ENCODE measurements at regions of chr9 and their contacts with region 1.

Region 1: GRCh38 chr9:112074250-112075008 is 100.7 kb downstream of the SUSD1 start:
- DNase-seq: peak; percentile 40
- ATAC-seq: peak; percentile 70
- H3K4me3 ChIP-seq: no peak overlapping the region
- H3K27ac ChIP-seq: no peak overlapping the region
- H3K4me1 ChIP-seq: peaks cover 16% of the 10 kb centered on the region
- H3K27me3 ChIP-seq: no peaks in the 10 kb centered on the region
- CTCF ChIP-seq: peak; percentile 82
- EP300 ChIP-seq: no peak
- POLR2A ChIP-seq: no peak
- RAD21 ChIP-seq: peak; percentile 80

Region 2: DNA sequence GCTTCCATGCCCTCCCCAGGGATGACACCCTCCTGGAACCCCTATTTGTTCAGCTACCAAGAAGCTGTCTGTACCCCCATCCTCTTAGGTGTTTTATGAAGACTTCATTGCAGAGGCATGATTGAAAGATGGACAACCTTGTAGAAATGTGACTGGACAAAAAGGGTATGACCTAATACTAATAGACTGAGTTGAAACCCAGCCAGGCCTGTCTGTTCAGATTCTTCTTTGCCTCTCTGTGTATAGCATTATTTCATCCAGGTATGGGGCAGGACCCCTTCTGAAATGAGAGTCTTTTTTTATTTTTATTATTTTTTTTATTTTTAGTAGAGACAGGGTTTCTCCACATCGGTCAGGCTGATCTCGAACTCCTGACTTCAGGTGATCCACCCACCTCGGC is 583.1 kb before region 1 on chr9:
- CTCF ChIA-PET with region 1: no interaction called
- POLR2A ChIA-PET with region 1: no interaction called
- in situ Hi-C with region 1: no loop called
- intact Hi-C with region 1: no loop called
- DNase-seq: no peak
- ATAC-seq: no peak
- H3K4me3 ChIP-seq: no peak overlapping the region
- H3K27ac ChIP-seq: no peak overlapping the region
- H3K4me1 ChIP-seq: no peaks in the 10 kb centered on the region; the same call in 1 of the 2 replicates
- H3K27me3 ChIP-seq: no peaks in the 10 kb centered on the region; a peak in 1 of 5 replicates
- CTCF ChIP-seq: no peak
- EP300 ChIP-seq: no peak
- POLR2A ChIP-seq: no peak
- RAD21 ChIP-seq: no peak

Region 3: GRCh38 chr9:111759762-111760639 is 314.4 kb before region 1 on chr9:
- CTCF ChIA-PET with region 1: interaction called, 42 read pairs
- POLR2A ChIA-PET with region 1: no interaction called
- in situ Hi-C with region 1: loop called (anchors 5 kb)
- intact Hi-C with region 1: loop called (anchors 1 kb)
- DNase-seq: peak; percentile 50
- ATAC-seq: peak; percentile 72
- H3K4me3 ChIP-seq: no peak overlapping the region
- H3K27ac ChIP-seq: no peak overlapping the region
- H3K4me1 ChIP-seq: no peaks in the 10 kb centered on the region
- H3K27me3 ChIP-seq: no peaks in the 10 kb centered on the region
- CTCF ChIP-seq: peak; percentile 76
- EP300 ChIP-seq: no peak
- POLR2A ChIP-seq: no peak
- RAD21 ChIP-seq: peak; percentile 60; the same call in 1 of the 2 replicates

Region 4: DNA sequence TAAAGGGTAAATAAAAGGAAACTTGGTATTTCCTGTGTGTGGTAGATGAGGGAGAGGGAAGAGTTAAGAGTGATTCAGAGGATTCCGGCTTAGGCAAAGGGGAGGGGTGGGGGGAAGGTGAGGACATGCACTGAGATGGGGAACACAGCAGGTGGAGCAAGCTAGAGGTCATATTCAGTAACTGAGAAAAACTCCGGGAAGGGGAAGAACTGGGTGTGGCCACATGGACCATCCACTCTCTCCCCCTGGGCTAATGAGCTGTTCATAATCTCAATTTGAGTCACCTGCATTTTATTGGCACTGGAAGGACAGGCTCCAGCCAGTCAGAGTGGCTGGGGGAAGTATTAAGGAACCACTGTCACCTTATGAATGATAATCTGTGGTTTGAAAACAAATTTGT is 222.9 kb before region 1 on chr9:
- CTCF ChIA-PET with region 1: no interaction called
- POLR2A ChIA-PET with region 1: no interaction called
- in situ Hi-C with region 1: no loop called
- intact Hi-C with region 1: loop called (anchors 5 kb)
- DNase-seq: no peak
- ATAC-seq: no peak
- H3K4me3 ChIP-seq: no peak overlapping the region
- H3K27ac ChIP-seq: no peak overlapping the region
- H3K4me1 ChIP-seq: no peaks in the 10 kb centered on the region
- H3K27me3 ChIP-seq: 0 out of 5 replicates have a peak, but pooled peaks cover 0 to 4% of the 10 kb centered on the region in 2 experiments
- CTCF ChIP-seq: no peak
- EP300 ChIP-seq: no peak
- POLR2A ChIP-seq: no peak
- RAD21 ChIP-seq: no peak

Region 5: GRCh38 chr9:111896353-111896958 is 178.0 kb before region 1 on chr9 and contains the start of gene UGCG:
- CTCF ChIA-PET with region 1: no interaction called
- POLR2A ChIA-PET with region 1: no interaction called
- in situ Hi-C with region 1: no loop called
- intact Hi-C with region 1: loop called (anchors 5 kb)
- DNase-seq: peak; percentile 74
- ATAC-seq: peak; percentile 93
- H3K4me3 ChIP-seq: peak within 1 kb of the TSS; percentile 70 to 91 (median 72)
- H3K27ac ChIP-seq: peak within 1 kb of the TSS; percentile 72
- H3K4me1 ChIP-seq: peaks cover 56% of the 10 kb centered on the region
- H3K27me3 ChIP-seq: no peaks in the 10 kb centered on the region
- CTCF ChIP-seq: no peak
- EP300 ChIP-seq: 0 out of 4 replicates have a peak, but pooled peaks of 1 of the 2 experiments have one; percentile 11
- POLR2A ChIP-seq: peak; percentile 91 to 97
- RAD21 ChIP-seq: peak; percentile 49; the same call in 1 of the 2 replicates
- total RNA-seq, gene UGCG: 9.7 and 13.9 TPM in 2 replicates

Region 6: GRCh38 chr9:111975709-111976108 is 98.7 kb before region 1 on chr9:
- CTCF ChIA-PET with region 1: no interaction called
- POLR2A ChIA-PET with region 1: no interaction called
- in situ Hi-C with region 1: no loop called
- intact Hi-C with region 1: loop called (anchors 10 kb)
- DNase-seq: peak; percentile 38
- ATAC-seq: peak; percentile 95
- H3K4me3 ChIP-seq: no peak overlapping the region
- H3K27ac ChIP-seq: no peak overlapping the region
- H3K4me1 ChIP-seq: peaks cover 9% of the 10 kb centered on the region; the same call in 1 of the 2 replicates
- H3K27me3 ChIP-seq: no peaks in the 10 kb centered on the region; a peak in 2 of 5 replicates
- CTCF ChIP-seq: peak; percentile 77
- EP300 ChIP-seq: no peak
- POLR2A ChIP-seq: no peak
- RAD21 ChIP-seq: peak; percentile 41; the same call in 1 of the 2 replicates